GM13977 (cell line): ENCODE measurements at regions of chr3 and their contacts with region 1.

Region 1: DNA sequence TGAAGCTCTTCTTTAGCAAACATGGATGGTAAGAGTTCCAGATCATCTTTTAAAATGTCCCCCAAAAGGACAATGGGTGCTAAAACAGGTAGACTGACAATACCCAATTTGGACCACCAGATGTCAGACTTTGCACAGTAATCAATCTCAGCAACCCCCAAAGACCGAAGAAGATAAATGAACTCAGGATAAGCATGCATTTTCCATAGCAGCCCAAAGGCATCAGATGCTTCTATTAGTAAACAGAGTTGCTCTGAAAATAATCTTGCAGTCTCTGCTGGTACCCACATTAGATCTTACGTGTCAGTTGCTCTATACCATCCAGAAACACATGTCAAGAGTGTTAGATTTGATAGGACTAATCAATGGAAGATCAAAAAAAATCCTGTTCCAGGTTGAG is 20.6 kb downstream of the MYH15 start:
- DNase-seq: peak; percentile 38
- CTCF ChIP-seq: peak; percentile 70

Region 2: GRCh38 chr3:108271626-108272025 is 218.1 kb before region 1 on chr3:
- in situ Hi-C with region 1: no loop called
- DNase-seq: no peak
- CTCF ChIP-seq: no peak

Region 3: GRCh38 chr3:108552267-108553159 is 62.7 kb after region 1 on chr3:
- in situ Hi-C with region 1: loop called (anchors 10 kb)
- DNase-seq: no peak
- CTCF ChIP-seq: peak; percentile 53